Transverse colon (tissue), 4 donors: ENCODE measurements at regions of chr11 and their contacts with region 1.

Region 1: DNA sequence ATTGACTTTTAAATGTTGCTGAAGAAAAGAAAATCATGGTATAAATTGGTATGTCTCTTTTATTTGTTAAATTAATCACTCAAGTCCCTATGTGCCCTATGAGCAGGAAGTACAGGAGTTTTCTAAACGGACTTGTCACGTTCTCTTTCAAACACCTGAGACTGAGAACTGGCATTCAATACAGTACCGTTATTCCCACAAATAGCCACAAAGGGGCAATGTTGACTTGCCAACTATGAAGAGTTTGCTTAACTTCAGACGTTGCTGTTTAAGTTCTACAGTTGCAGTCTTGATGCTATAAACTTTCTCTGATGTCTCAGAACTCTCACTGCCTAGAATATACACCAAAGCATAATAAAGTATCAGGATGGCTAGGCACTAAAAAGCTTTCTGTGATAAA is 7.6 kb downstream of the OR56A1 start:
- DNase-seq: no peak
- H3K4me3 ChIP-seq: no peak overlapping the region
- H3K27ac ChIP-seq: no peak overlapping the region
- H3K4me1 ChIP-seq: no peaks in the 10 kb centered on the region
- H3K27me3 ChIP-seq: no peaks in the 10 kb centered on the region
- CTCF ChIP-seq: peak; percentile 41 to 62 (median 55)
- EP300 ChIP-seq: no peak
- POLR2A ChIP-seq: no peak

Region 2: GRCh38 chr11:6315811-6316425 is 293.0 kb after region 1 on chr11:
- in situ Hi-C with region 1: loop called in 1 of 4 experiments (anchors 25 kb)
- intact Hi-C with region 1: no loop called
- DNase-seq: peak; percentile 45
- H3K4me3 ChIP-seq: no peak overlapping the region
- H3K27ac ChIP-seq: no peak overlapping the region
- H3K4me1 ChIP-seq: peaks cover 10 to 26% (median 18%) of the 10 kb centered on the region in 4 donors
- H3K27me3 ChIP-seq: peaks cover 5% of the 10 kb centered on the region
- CTCF ChIP-seq: peak; percentile 69 to 83 (median 75)
- EP300 ChIP-seq: no peak
- POLR2A ChIP-seq: no peak

Region 3: GRCh38 chr11:6333112-6333511 is 310.2 kb after region 1 on chr11:
- in situ Hi-C with region 1: loop called in 1 of 4 experiments (anchors 25 kb)
- intact Hi-C with region 1: no loop called
- DNase-seq: no peak
- H3K4me3 ChIP-seq: no peak overlapping the region
- H3K27ac ChIP-seq: no peak overlapping the region
- H3K4me1 ChIP-seq: peaks cover 0 to 4% (median 0%) of the 10 kb centered on the region in 4 donors
- H3K27me3 ChIP-seq: no peaks in the 10 kb centered on the region
- CTCF ChIP-seq: no peak
- EP300 ChIP-seq: no peak
- POLR2A ChIP-seq: no peak

Region 4: DNA sequence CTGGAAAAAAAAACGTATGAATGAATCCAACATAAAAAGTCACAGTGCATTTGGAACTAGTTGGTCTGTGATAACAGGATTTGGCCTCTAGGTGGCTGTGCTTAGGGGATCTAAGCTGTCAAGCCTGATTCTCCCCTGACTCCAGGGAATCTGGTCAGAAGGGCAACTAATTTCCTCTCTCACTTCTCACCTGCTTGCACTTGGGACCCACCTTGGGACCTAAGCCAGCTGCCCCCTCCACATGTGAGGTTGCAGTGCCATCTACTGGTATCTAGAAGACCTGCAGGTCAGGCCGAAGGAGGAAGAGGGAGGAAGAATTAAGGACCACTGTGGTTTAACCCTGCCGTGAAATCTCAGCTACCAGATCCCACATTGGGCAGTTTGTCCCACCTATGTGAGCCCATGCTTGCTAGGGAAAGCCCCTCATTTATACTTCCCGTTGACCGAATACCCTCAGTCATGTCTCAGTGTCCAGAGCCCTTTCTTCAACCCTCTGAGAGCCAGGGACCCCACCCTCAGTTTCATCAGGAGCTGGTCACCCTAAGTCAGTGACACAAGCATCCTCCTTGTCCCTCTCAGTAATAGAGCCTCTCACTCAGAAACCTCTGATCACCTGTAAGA is 330.5 kb after region 1 on chr11:
- in situ Hi-C with region 1: loop called in 3 of 4 experiments (anchors 10 to 25 kb)
- intact Hi-C with region 1: no loop called
- DNase-seq: peak; percentile 55
- H3K4me3 ChIP-seq: no peak overlapping the region
- H3K27ac ChIP-seq: no peak overlapping the region
- H3K4me1 ChIP-seq: peaks cover 0 to 8% (median 0%) of the 10 kb centered on the region in 4 donors
- H3K27me3 ChIP-seq: no peaks in the 10 kb centered on the region
- CTCF ChIP-seq: peak; percentile 83 to 94 (median 87)
- EP300 ChIP-seq: no peak
- POLR2A ChIP-seq: no peak

Region 5: DNA sequence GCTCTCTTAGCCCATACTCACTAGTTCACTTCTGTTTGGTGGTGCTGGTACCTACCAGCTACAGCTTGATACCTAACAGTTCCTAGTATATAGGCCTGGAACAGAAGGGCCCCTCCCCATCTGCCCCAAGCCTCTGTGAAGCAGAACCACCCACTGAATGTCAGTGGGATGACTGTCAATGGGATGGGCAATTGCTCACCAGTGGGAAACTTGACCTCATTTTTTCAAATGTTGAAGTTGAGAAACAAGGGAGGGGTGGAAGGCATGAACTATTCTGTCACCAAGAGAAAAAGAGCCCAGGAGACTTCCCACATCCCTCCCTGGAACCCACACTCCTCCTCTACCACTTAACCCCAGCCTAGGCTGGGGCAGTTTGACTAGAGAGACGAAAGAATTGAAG is 1942.4 kb after region 1 on chr11 and contains the start of gene NLRP10:
- in situ Hi-C with region 1: no loop called
- intact Hi-C with region 1: no loop called
- DNase-seq: no peak
- H3K4me3 ChIP-seq: no peak within 1 kb of the TSS
- H3K27ac ChIP-seq: no peak within 1 kb of the TSS
- H3K4me1 ChIP-seq: no peaks in the 10 kb centered on the region
- H3K27me3 ChIP-seq: no peaks in the 10 kb centered on the region
- CTCF ChIP-seq: no peak
- EP300 ChIP-seq: no peak
- POLR2A ChIP-seq: no peak
- total RNA-seq, gene NLRP10: not detected